GM18951 (cell line): ENCODE measurements at regions of chr10 and their contacts with region 1.

Region 1: GRCh38 chr10:59606551-59606961 is 103.1 kb downstream of the SLC16A9 start:
- POLR2A ChIP-seq: no peak

Region 2: GRCh38 chr10:58952747-58953466 is 653.6 kb before region 1 on chr10:
- in situ Hi-C with region 1: loop called (anchors 25 kb)
- POLR2A ChIP-seq: no peak